ENCODE measurements at regions of chr3 and their contacts with region 1.

Region 1: DNA sequence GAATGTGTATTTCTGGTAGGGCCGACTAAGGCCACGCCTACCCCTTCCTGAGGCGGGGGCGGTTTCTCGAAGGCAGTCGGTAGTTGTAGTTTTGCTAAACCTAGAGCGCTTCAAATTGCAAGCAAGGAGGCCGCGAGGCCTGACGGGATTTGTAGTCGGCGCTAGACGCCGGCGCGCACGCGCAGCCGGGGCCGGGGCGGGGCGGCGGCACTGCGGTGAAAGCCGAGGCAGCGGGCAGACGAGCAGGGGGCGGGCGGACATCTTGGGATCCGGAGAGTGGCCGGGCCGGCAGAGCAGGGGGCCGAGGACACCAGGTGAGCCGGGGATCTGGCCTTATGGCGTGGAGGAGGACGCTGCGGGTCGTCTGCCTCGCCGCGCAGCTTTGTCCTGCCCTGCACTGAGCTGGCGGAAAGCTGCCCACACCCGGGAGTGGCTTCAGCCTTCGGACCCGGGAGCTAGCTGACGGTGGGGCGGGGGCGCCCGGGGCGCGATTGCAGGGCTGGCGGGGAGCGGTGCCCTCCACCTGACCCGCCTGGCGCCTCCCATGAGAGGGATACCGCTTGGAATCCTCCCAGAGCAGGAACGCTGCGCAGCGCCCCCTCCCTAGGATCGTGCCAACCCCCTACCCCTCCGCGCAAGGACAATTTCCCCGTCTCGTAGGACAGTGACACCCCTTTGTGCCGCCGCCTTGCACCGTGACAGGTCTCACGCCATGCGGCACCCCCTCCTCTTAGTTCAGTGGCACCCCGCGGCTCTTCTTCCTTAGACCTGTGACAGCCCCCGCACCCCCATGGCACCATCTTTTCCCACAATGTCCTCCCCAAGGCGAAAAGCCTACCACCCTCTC is at the start of gene AP2M1:
- DNase-seq: peak; percentile 98
- H3K4me3 ChIP-seq: peak within 1 kb of the TSS; percentile 78 to 99 (median 82)
- H3K27ac ChIP-seq: peak within 1 kb of the TSS; percentile 53
- H3K4me1 ChIP-seq: peaks cover 29% of the 10 kb centered on the region
- H3K27me3 ChIP-seq: no peaks in the 10 kb centered on the region
- CTCF ChIP-seq: peak in 1 of 2 donors; percentile 10
- total RNA-seq, gene AP2M1: 291 to 348 TPM

Region 2: DNA sequence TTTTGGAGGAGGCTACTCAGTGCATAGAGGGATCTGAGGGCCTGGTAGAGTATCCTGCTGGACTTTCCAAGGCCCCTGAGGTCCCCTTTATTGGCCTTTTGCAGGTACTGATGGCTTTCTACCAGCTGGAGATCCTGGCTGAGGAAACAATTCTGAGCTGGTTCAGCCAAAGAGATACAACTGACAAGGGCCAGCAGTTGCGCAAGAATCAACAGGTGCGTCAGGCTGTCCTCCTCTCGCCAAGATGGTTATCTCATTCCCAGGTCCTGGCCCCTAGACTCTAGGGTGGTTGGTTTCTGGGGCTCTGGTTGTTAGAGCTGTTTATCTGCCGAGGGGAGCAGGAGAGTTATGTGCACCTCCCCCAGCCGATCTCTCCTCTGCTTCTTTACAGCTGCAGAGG is 30.4 kb before region 1 on chr3:
- CTCF ChIA-PET with region 1: no interaction called
- dilution Hi-C with region 1: no loop called
- in situ Hi-C with region 1: no loop called
- intact Hi-C with region 1: no loop called
- DNase-seq: no peak
- H3K4me3 ChIP-seq: no peak overlapping the region
- H3K27ac ChIP-seq: no peak overlapping the region
- H3K4me1 ChIP-seq: no peaks in the 10 kb centered on the region
- H3K27me3 ChIP-seq: no peaks in the 10 kb centered on the region
- CTCF ChIP-seq: no peak

Region 3: GRCh38 chr3:184154885-184155643 is 19.8 kb before region 1 on chr3 and contains the start of gene DVL3:
- CTCF ChIA-PET with region 1: no interaction called
- dilution Hi-C with region 1: no loop called
- in situ Hi-C with region 1: no loop called
- intact Hi-C with region 1: loop called (anchors 1 kb)
- DNase-seq: peak; percentile 64
- H3K4me3 ChIP-seq: peak within 1 kb of the TSS; percentile 66 to 88 (median 86)
- H3K27ac ChIP-seq: peak within 1 kb of the TSS; percentile 14
- H3K4me1 ChIP-seq: peaks cover 12% of the 10 kb centered on the region
- H3K27me3 ChIP-seq: no peaks in the 10 kb centered on the region
- CTCF ChIP-seq: no peak
- total RNA-seq, gene DVL3: 35.2 to 58.7 TPM

Region 4: GRCh38 chr3:184209146-184209923 is 34.5 kb after region 1 on chr3:
- CTCF ChIA-PET with region 1: interaction called, 10 read pairs
- dilution Hi-C with region 1: no loop called
- in situ Hi-C with region 1: no loop called
- intact Hi-C with region 1: no loop called
- DNase-seq: no peak
- H3K4me3 ChIP-seq: no peak overlapping the region
- H3K27ac ChIP-seq: no peak overlapping the region
- H3K4me1 ChIP-seq: no peaks in the 10 kb centered on the region
- H3K27me3 ChIP-seq: no peaks in the 10 kb centered on the region
- CTCF ChIP-seq: no peak

Region 5: DNA sequence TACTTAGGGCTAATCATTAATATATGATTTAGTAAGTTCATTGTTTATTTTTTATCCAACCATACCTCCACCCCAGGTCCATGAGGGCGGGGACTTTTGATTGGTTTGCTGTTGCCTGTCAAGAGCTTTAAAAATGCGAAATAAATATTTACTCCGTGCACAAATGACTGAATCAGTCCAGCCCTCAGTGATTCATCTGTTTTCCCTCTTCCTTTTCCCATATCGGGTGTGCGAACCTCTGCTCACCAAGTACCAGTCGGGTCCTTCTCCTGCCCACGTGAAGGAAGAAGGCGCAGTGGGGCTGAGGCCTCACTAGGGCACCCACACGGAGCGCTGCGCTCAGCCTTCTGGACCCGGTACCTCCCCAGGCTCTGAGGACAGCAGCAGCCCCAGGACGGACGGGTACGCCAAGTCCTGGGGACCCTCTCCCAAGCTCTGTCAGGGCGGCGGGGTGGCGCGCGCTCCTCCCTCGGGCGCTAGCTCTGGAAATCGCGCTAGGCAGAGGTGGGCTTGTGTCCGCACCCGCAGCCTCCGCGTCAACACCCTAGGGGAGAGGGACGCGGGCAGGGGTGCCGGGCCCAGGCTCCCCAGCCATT is 316.2 kb after region 1 on chr3:
- CTCF ChIA-PET with region 1: no interaction called
- dilution Hi-C with region 1: no loop called
- in situ Hi-C with region 1: no loop called
- intact Hi-C with region 1: no loop called
- DNase-seq: no peak
- H3K4me3 ChIP-seq: no peak overlapping the region
- H3K27ac ChIP-seq: no peak overlapping the region
- H3K4me1 ChIP-seq: peaks cover 3% of the 10 kb centered on the region
- H3K27me3 ChIP-seq: peaks cover 27% of the 10 kb centered on the region
- CTCF ChIP-seq: no peak

Measured in mammary epithelial cell (primary cell).